Heart right ventricle (tissue), 16 donors: ENCODE measurements at regions of chr19 and their contacts with region 1.

Region 1: GRCh38 chr19:5897189-5897969 is 6.2 kb downstream of the NDUFA11 start:
- DNase-seq: no peak
- ATAC-seq: no peak
- H3K4me3 ChIP-seq: no peak overlapping the region
- H3K27ac ChIP-seq: peak overlapping the region in 1 of 10 donors; percentile 30
- H3K4me1 ChIP-seq: peaks cover 5 to 68% (median 40%) of the 10 kb centered on the region in 9 donors
- H3K27me3 ChIP-seq: peaks cover 0 to 6% (median 0%) of the 10 kb centered on the region in 7 donors
- CTCF ChIP-seq: no peak

Region 2: GRCh38 chr19:5790573-5791520 is 106.5 kb before region 1 on chr19 and contains the start of gene DUS3L:
- intact Hi-C with region 1: no loop called
- DNase-seq: peak; percentile 95 to 96
- ATAC-seq: peak; percentile 96 to 99 (median 98)
- H3K4me3 ChIP-seq: peak within 1 kb of the TSS; percentile 65 to 92 (median 84)
- H3K27ac ChIP-seq: peak within 1 kb of the TSS; percentile 85 to 100 (median 97)
- H3K4me1 ChIP-seq: peaks cover 2 to 9% (median 6%) of the 10 kb centered on the region in 9 donors
- H3K27me3 ChIP-seq: no peaks in the 10 kb centered on the region
- CTCF ChIP-seq: no peak
- total RNA-seq, gene DUS3L: 11.5 to 27.8 (median 14.2) TPM

Region 3: GRCh38 chr19:5947435-5947834 is 50.1 kb after region 1 on chr19:
- intact Hi-C with region 1: no loop called
- DNase-seq: peak; percentile 46 to 61
- ATAC-seq: peak; percentile 9 to 73 (median 44)
- H3K4me3 ChIP-seq: peak overlapping the region in 4 of 10 donors; percentile 10 to 33 (median 21)
- H3K27ac ChIP-seq: peak overlapping the region in 9 of 10 donors; percentile 15 to 89 (median 59)
- H3K4me1 ChIP-seq: peaks cover 32 to 82% (median 74%) of the 10 kb centered on the region in 9 donors
- H3K27me3 ChIP-seq: no peaks in the 10 kb centered on the region
- CTCF ChIP-seq: no peak

Region 4: DNA sequence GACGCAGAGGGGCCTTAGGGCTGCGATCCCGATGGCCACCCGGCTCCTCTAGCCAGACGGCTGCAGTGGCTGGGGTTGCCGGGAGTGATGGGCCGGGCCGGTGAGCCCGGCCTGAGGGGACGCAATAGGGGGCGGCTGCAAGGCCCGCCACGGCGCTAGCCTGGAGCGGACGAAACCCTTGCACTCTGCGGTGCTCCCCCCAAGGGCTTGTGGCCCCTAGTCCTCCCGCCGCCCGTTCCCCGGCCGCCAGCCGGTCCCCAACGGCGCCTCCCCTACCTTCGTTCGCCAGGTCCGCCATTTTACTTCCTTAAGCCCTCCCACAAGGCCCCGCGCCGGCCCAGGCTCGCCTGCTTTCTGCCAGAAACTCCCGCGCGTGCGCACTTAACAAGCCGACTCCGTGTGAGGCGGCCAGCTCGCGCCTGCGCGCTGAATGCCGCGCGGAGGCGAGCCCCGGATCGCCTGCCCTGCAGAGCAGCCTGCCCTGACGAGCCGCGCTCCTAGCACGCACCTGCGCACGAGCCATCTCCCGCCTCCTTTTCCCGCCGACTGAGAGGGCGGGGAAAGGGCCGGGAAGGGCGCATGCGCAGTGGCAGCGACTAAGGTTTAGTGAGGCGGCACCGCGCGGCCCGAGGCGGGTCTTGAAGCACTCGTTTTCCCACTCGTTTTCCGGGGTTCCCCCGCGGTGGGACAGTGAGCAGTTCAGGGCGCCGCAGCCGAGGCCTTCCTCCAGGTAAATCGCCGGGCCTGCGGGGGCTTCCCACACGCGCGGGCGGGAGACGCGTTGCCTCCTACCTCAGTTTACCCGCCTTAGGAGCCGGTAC is 80.6 kb after region 1 on chr19 and contains the start of gene RANBP3:
- intact Hi-C with region 1: loop called in 4 of 10 experiments (anchors 5 kb)
- DNase-seq: peak; percentile 98 to 99
- ATAC-seq: peak; percentile 98 to 99 (median 98)
- H3K4me3 ChIP-seq: peak within 1 kb of the TSS; percentile 80 to 100 (median 96)
- H3K27ac ChIP-seq: peak within 1 kb of the TSS; percentile 65 to 95 (median 92)
- H3K4me1 ChIP-seq: peaks cover 10 to 59% (median 47%) of the 10 kb centered on the region in 9 donors
- H3K27me3 ChIP-seq: no peaks in the 10 kb centered on the region
- CTCF ChIP-seq: no peak
- total RNA-seq, gene RANBP3: 51.4 to 76.1 (median 63.3) TPM